Adrenal gland (tissue), 19 donors: ENCODE measurements at regions of chr3 and their contacts with region 1.

Region 1: DNA sequence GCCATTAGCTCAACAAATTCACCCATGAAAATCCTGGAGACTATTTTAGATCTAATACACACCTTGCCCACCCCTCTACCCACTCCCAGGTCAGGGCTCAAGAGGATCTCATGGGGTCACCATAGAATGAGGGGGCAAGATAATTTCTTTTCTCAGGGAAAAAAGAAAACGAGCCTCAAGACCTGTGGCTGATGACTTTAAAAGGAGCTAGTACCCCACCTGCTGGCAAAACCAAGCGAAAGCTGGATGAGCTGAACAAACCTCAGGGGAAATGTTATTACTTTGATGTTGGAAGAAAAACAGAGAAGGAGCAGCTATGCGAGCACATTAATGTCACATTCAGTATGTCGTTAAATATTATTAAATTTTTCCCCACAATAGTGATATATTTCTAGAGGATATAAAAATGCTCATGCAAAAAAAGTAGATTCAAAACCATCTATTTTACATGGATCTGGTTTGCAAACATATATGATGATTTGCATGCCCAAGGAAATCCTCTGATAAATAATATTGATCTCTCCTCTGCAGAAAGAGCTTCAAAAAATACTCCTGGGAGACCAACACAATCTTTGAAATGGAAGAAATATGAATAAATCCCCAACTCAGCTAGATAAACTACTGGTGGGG is 37.7 kb downstream of the PLD1 start:
- DNase-seq: peak; percentile 67 to 89 (median 75)
- H3K4me3 ChIP-seq: no peak overlapping the region
- H3K27ac ChIP-seq: peak overlapping the region in 1 of 5 donors; percentile 85
- H3K4me1 ChIP-seq: peaks cover 15 to 49% of the 10 kb centered on the region in 2 donors
- H3K27me3 ChIP-seq: no peaks in the 10 kb centered on the region
- CTCF ChIP-seq: peak; percentile 48 to 76 (median 70)
- POLR2A ChIP-seq: no peak

Region 2: GRCh38 chr3:171654809-171655208 is 117.7 kb before region 1 on chr3:
- intact Hi-C with region 1: loop called (anchors 5 to 10 kb)
- DNase-seq: peak; percentile 56 to 89 (median 76)
- H3K4me3 ChIP-seq: no peak overlapping the region
- H3K27ac ChIP-seq: peak overlapping the region; percentile 45 to 65 (median 58)
- H3K4me1 ChIP-seq: peaks cover 16 to 25% of the 10 kb centered on the region in 2 donors
- H3K27me3 ChIP-seq: no peaks in the 10 kb centered on the region
- CTCF ChIP-seq: no peak
- POLR2A ChIP-seq: no peak

Region 3: DNA sequence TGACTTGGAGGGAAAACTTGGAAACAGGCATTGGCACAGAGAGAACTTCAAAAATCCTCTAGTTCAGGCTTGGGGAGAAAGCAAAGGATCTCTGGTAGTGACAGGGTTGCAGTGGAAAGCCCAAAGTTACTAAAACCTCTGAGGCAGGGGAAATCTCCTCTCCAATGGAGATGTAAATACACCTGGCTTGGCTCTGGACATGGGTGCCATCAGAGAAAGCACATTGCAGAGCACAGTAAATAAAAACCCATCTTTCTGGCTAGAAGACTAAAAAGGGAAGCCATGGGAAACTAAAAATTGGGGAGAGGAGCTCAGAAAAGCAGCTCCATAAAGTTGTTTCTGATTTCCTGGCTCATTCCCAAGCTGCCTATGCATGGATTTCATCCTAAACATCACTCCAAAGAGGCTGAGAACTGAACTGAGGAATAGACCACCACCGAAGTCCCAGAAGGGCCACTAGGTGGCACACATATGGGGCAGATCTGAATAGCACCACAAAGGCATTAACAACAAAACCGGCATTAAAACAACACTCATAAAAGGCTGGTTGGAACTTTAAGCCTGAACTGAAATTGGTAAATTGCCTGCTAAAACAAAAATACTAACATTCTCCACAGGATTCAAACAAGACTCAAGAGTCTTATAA is 68.7 kb before region 1 on chr3:
- intact Hi-C with region 1: loop called in 1 of 2 experiments (anchors 10 kb)
- DNase-seq: peak in 4 of 7 donors; percentile 15 to 39 (median 28)
- H3K4me3 ChIP-seq: no peak overlapping the region
- H3K27ac ChIP-seq: no peak overlapping the region
- H3K4me1 ChIP-seq: no peaks in the 10 kb centered on the region
- H3K27me3 ChIP-seq: no peaks in the 10 kb centered on the region
- CTCF ChIP-seq: peak; percentile 16 to 49 (median 36)
- POLR2A ChIP-seq: no peak

Region 4: DNA sequence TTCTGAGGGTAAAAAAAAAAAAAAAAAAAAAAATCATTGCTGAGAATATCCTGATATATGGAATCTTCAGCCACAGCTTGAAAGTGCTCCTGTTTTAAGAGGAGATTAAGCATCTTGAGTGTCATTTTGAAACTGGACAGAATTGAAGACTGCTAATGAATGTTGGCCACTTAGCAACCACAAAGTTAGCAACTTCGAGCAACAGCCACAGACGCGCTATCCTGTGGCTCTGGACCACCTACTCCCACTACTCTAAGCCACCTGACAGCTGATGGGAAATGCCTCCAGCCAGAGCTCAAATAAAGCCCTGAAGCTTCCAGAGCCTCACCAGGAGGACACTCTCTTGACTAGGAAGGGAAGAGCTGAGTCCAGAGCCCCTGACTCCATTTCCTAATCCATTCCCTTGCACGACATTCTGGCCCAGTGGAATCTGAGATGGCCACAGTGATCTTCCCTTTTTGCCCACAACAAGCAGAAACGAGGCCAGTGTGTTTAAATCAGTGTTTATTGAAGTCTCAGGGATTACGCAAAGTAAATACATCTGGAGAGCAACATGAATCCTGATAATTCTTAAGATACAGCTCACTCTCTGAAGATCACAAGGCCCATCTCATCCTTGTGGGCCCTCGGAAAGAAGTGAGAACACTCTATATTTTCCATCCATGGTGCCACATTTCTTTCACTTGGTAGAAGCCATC is 129.2 kb after region 1 on chr3:
- intact Hi-C with region 1: no loop called
- DNase-seq: no peak
- H3K4me3 ChIP-seq: no peak overlapping the region
- H3K27ac ChIP-seq: no peak overlapping the region
- H3K4me1 ChIP-seq: no peaks in the 10 kb centered on the region
- H3K27me3 ChIP-seq: no peaks in the 10 kb centered on the region
- CTCF ChIP-seq: no peak
- POLR2A ChIP-seq: no peak